ENCODE measurements at regions of chr13 and their contacts with region 1.

Region 1: DNA sequence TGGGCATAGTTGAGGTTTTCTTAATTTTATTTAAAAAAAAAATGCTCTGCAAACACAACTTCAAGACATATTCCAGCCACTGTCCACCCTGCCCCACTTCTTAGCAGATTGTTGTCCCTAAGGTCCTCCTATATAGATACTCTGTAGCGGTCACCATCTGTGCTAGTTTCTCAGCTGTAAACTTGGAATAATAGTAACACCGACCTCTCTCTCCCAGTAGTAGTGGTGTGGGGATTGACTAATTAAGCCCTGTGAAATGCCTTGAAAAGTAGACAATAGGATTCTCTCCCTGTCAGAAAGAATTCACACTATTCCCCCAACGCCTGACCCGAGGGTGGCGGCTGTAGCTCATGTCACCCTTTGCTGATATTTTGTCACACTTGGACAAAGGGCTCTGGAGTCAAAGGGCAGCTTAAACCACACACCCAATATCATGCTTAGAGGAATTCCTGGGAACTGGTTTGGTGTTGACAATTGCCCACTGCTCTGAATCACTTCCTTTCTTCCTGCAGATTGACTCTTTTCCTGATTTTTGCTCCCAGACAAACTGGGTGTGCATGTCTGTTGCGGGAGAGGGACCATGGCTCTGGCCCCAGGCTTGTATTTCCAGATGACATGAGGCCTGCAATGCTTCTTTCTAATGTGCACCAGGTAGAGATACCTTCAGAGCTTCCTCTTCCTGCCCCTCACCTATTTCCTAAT is 9.1 kb upstream of the SERP2 start:
- DNase-seq: no peak
- ATAC-seq: peak; percentile 30 to 45

Region 2: GRCh38 chr13:44022163-44022562 is 342.3 kb before region 1 on chr13:
- intact Hi-C with region 1: no loop called
- DNase-seq: no peak
- ATAC-seq: peak in 1 of 2 donors; percentile 82

Region 3: DNA sequence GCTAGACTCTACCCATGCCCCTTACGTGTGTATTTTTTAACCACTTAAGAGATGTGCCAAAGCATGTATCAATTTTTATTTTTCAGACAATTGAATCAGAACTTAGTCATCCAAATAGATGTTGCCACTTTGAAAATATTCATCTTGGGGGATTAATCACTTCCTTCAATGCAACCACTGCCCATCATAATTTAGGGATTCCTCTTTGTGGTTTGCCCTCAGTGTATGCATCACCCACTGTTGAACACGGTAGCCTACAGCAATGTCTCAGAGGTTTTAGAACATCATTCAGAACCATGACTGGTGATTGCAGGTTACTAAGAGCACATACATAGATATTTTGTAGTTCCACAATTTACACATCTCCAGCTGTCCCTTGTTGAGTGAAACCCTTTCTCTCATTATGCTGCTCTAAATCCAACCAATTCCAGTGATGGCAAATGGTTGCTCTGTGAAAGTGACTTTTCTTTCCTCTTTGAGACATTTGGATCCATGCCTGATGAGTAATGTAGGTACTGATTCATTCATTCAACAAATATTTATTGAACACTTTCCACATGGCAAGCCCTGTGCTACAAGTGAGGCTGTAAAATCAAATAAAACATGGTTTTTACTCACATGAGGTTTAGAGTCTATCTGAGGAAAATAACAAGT is 51.5 kb before region 1 on chr13:
- intact Hi-C with region 1: loop called in 1 of 2 experiments (anchors 5 kb)
- DNase-seq: no peak
- ATAC-seq: peak in 1 of 2 donors; percentile 31

Measured in left cardiac atrium (tissue), 4 donors.